ENCODE measurements at regions of chr2 and their contacts with region 1.

Region 1: GRCh38 chr2:44912660-44913059 is 28.8 kb upstream of the SIX3 start:
- DNase-seq: no peak

Region 2: GRCh38 chr2:44821500-44821899 is 91.2 kb before region 1 on chr2:
- in situ Hi-C with region 1: loop called (anchors 5 kb)
- DNase-seq: no peak

Region 3: DNA sequence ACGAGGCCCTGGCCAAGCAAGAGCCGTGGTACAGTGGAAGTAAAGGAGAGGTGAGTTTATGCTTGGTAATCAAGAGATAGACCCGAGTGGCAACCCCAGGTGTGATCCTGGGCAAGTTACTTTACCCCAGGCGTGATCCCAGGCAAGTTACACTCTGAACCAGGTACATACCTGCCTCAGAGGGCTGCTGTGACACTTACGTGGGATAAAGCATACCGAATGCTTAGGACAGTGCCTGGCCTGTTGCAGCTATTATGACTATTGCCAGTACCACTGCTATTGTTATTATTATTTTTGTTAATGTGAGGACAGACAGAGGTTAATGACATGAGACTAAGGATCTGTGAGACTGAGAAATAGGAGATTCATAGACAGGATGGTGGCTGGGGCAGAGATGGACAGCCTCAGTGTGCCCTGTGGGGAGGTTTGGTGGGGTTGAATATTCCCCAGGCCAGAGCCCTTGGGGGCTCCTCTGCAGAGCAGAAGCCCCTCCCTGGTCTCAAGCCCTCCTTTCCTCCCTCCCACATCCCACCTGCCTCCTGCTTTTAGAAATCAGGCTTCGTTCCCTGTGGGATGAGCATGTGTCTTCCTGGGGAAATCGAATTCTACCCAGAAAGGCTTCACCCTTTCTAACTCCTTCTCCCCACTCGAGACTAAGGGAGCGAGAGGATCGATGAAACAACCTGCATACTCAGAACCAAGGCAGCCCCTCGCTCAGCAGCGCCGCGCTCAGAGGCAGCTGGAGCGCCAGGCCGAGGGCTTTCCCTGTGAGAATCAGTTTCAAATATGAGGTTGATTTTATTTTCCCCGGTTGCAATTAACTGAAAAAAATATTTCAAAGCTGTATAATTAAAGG is 33.2 kb before region 1 on chr2:
- in situ Hi-C with region 1: no loop called
- DNase-seq: no peak

Region 4: GRCh38 chr2:45199973-45200372 is 287.3 kb after region 1 on chr2:
- in situ Hi-C with region 1: no loop called
- DNase-seq: no peak